Mammary epithelial cell (primary cell): ENCODE measurements at regions of chr1 and their contacts with region 1.

Region 1: DNA sequence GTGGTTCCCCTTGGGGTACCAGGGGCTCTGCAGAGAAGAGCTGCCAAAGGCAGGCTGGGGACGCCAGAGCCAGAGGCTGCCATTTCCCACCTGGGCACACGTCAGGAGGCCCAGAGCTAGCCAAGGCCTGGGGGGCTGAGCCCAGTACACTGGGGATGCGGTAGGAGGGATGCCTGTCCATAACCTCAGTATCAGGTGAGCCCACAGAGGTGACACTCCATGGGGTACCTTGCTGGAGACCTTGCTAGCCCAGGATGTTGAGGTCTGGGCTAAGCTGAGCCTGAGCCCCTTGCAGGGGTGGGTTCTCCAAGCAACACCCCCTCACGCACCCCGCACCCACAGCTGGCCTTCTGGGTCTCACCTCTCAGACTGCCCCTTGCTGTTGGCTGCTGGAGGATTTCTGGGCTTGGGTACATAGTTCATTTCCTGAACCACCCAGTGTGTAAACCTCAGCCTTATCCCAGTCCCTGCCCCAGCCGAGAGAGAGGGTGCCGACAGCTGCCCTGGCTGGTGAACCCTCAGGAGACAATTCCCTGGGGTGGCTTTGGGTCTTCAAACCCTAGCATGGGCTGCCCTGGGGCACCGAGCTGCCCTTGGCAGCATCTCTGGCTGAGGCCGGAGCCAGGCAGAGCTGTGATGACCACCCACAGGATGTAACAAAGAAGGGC is 92.5 kb upstream of the VAMP3 start:
- DNase-seq: no peak
- H3K4me3 ChIP-seq: no peak overlapping the region
- H3K27ac ChIP-seq: no peak overlapping the region
- H3K4me1 ChIP-seq: peaks cover 2% of the 10 kb centered on the region
- H3K27me3 ChIP-seq: peaks cover 2% of the 10 kb centered on the region
- CTCF ChIP-seq: no peak

Region 2: DNA sequence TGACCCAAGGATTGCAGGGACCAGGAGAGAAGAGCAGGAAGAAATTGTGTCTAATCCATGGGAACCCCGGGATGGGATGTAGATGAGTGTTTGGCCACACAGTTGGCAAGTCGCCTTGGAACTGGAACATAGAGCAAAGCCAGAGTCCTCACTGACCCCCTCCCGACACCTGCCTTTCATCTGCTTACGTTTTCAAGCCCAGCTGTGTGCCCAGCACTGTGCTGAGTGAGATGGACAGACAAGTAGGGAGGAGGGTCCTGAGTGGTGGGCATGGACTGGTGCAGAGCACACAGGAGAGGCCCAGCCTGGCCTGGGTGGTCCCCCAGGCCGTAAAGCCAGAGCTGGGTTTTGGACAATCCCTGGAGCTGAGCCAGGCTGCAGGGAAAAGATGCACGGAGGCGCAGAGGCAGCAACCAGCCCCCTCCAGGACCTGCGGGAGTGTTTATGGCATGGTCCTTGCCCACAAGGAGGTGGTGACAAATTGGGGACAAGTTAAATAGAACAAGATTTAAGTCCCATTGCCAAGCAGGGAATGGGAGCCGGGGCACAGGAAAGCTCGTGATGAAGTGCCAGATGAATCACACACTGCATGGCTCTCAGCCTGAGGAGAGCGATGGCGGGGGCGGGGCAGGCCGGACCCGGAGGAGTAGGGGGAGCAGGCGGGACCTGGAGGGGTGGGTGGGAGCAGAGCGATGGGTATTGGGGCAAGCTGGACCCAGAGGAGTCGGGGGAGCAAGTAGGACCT is 65.3 kb before region 1 on chr1:
- CTCF ChIA-PET with region 1: no interaction called
- dilution Hi-C with region 1: loop called (anchors 5 kb)
- in situ Hi-C with region 1: no loop called
- intact Hi-C with region 1: no loop called
- DNase-seq: no peak
- H3K4me3 ChIP-seq: no peak overlapping the region
- H3K27ac ChIP-seq: no peak overlapping the region
- H3K4me1 ChIP-seq: no peaks in the 10 kb centered on the region
- H3K27me3 ChIP-seq: no peaks in the 10 kb centered on the region
- CTCF ChIP-seq: no peak